Mammary epithelial cell (primary cell): ENCODE measurements at regions of chr2 and their contacts with region 1.

Region 1: GRCh38 chr2:241959751-241960269 is 90.3 kb downstream of the RTP5 start:
- DNase-seq: no peak
- H3K4me3 ChIP-seq: no peak overlapping the region
- H3K27ac ChIP-seq: no peak overlapping the region
- H3K4me1 ChIP-seq: no peaks in the 10 kb centered on the region
- H3K27me3 ChIP-seq: peaks cover 3% of the 10 kb centered on the region
- CTCF ChIP-seq: no peak

Region 2: DNA sequence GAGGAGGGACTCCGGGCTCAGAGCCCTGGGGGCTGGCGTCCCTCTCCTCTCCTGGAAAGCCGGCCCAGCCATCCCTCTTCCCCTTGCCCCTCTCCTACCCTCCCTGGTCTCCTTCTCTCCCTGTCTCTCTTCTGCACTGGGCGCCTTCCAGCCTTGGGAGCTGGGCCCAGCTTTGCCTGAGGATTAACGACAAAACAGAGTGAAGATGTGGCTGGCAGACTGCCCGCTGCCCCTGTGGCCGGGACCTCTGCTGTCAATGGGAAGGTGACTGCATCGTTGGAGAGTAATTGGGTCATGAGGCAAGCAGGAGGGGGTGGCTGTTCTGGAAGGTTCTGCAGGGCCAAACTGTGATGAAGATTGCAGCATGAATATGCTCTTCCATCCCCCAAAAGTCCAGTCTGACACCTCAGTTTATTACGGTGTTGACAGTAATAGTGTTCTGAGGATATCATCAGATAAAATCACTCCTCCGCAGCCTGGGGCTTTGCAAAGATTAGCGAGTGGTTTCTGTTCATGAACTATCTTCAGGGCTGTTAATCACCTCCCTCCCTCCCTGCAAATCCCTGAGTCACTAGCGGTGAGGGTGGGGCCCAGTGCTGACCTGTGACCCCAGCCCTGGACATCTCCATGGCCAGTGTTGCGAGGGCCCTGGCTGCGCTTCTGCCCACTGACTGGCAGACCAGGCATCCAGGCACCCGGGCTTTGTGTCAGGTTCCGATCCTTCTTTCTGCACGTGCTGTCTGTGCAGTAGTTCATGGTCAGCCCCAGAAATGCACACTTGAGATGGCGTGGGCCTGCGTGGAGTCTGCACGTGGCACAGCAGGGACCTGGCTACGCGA is 67.3 kb before region 1 on chr2:
- CTCF ChIA-PET with region 1: no interaction called
- dilution Hi-C with region 1: loop called (anchors 5 kb)
- in situ Hi-C with region 1: no loop called
- intact Hi-C with region 1: no loop called
- DNase-seq: peak; percentile 44
- H3K4me3 ChIP-seq: no peak overlapping the region
- H3K27ac ChIP-seq: no peak overlapping the region
- H3K4me1 ChIP-seq: peaks cover 6% of the 10 kb centered on the region
- H3K27me3 ChIP-seq: no peaks in the 10 kb centered on the region
- CTCF ChIP-seq: no peak

Region 3: GRCh38 chr2:242054881-242055801 is 95.3 kb after region 1 on chr2:
- CTCF ChIA-PET with region 1: no interaction called
- dilution Hi-C with region 1: loop called (anchors 5 kb)
- in situ Hi-C with region 1: no loop called
- intact Hi-C with region 1: no loop called
- DNase-seq: no peak
- H3K4me3 ChIP-seq: no peak overlapping the region
- H3K27ac ChIP-seq: no peak overlapping the region
- H3K4me1 ChIP-seq: no peaks in the 10 kb centered on the region
- H3K27me3 ChIP-seq: peaks cover 15% of the 10 kb centered on the region
- CTCF ChIP-seq: no peak